ENCODE measurements at regions of chr3 and their contacts with region 1.

Region 1: DNA sequence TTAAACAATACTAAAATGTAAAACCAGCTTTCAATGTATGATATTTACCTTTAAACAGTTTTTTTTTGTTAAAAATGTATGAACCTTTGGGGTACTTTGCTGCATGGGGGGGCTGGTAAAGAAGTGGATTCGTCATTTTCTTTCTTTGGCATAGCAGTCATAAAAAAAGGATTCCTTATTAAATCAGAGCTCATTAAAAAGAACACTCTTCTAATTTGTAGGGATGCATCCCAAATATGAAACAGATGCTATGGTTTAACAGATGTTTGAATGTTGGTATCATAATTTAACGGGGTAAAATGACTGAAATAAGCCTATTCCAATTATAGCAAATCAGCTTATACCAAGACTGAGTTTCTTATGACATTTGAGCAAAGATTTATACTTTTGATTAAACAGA is 234.4 kb downstream of the BBX start:
- DNase-seq: no peak
- H3K4me3 ChIP-seq: no peak overlapping the region
- H3K27me3 ChIP-seq: no peaks in the 10 kb centered on the region
- CTCF ChIP-seq: no peak

Region 2: DNA sequence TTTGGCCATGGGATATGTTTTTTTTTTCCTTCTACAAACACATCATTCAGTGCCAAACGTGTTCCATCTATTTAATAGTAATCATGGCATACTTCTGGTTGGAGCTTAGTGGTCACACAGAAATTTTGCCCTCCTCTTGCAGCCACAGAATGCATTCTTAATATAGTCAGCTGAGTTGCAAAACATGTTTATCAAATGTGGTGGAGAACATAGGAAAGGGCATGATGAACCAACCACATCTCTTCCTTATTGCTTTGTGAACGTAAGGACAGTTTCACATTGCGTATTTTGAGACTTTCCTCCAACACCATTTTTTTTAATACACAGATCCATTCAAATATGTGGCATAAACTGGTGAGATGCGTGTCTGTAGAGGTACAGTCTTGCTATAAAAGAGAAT is 127.6 kb before region 1 on chr3:
- CTCF ChIA-PET with region 1: interaction called, 3 read pairs
- POLR2A ChIA-PET with region 1: interaction called, 11 read pairs
- DNase-seq: no peak
- H3K4me3 ChIP-seq: no peak overlapping the region
- H3K27me3 ChIP-seq: no peaks in the 10 kb centered on the region
- CTCF ChIP-seq: no peak